ENCODE measurements at regions of chr2 and their contacts with region 1.

Region 1: DNA sequence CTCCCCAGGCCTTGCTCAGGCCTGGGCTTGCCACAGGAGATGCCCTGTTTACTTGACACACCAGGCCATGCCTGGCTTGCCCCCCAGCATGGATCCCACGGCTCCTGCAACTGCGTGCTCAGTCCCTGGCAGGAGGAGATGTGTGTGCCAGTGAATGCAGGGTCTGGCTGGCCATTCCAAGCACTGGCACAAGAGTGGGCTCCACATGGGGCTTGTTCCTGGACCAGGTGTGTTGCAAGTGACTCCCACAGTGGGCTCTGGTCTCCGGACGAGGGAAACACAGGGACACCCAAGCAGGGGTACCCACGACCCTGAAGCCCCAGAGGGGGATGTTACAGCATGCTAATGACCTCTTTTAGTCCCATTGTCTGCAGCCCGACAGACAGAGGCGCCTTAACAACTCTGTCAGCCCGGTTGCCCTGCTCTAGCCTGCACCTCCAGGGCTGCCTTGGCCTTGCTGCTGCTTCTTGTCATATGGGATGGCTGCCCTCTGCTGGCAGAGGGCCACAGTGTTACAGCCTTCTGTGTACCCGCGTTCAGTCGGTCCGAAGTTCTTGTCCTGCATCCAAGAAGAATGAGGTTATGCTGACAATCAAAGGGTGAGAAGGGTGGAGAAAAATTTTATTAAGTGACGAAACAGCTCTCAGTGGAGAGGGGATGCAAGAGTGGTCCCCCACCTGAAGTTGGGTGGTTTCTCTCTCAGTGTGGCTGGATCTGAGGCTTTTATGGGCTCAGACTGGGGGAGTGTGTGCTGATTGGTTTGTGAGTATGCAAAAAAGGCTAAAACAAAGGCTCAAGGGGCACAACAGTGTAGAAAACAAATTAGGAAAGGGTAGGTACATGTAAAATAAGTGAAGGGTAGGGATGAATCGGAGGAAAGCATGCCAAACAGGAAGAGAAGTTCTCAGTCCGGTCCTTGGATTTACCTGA is 180.4 kb downstream of the MBD5 start:
- DNase-seq: peak in 4 of 5 donors; percentile 17 to 23 (median 20)
- H3K4me3 ChIP-seq: no peak overlapping the region
- H3K4me3 Mint-ChIP-seq: no peak overlapping the region
- H3K27ac ChIP-seq: no peak overlapping the region
- H3K27ac Mint-ChIP-seq: peak overlapping the region in 2 of 7 donors; percentile 35 to 75
- H3K4me1 ChIP-seq: no peaks in the 10 kb centered on the region
- H3K4me1 Mint-ChIP-seq: peaks cover 0 to 5% (median under 1%) of the 10 kb centered on the region in 4 donors
- H3K27me3 ChIP-seq: no peaks in the 10 kb centered on the region
- H3K27me3 Mint-ChIP-seq: no peaks in the 10 kb centered on the region

Region 2: GRCh38 chr2:147989809-147990403 is 211.4 kb before region 1 on chr2:
- CTCF ChIA-PET with region 1: interaction called, 11 read pairs
- POLR2A ChIA-PET with region 1: no interaction called
- intact Hi-C with region 1: no loop called
- DNase-seq: peak; percentile 45 to 61 (median 58)
- H3K4me3 ChIP-seq: no peak overlapping the region
- H3K4me3 Mint-ChIP-seq: no peak overlapping the region
- H3K27ac ChIP-seq: no peak overlapping the region
- H3K27ac Mint-ChIP-seq: peak overlapping the region in 3 of 7 donors; percentile 7 to 72 (median 53)
- H3K4me1 ChIP-seq: no peaks in the 10 kb centered on the region
- H3K4me1 Mint-ChIP-seq: peaks cover 14 to 29% (median 19%) of the 10 kb centered on the region in 4 donors
- H3K27me3 ChIP-seq: no peaks in the 10 kb centered on the region
- H3K27me3 Mint-ChIP-seq: no peaks in the 10 kb centered on the region

Region 3: GRCh38 chr2:148756396-148756931 is 555.1 kb after region 1 on chr2:
- CTCF ChIA-PET with region 1: no interaction called
- POLR2A ChIA-PET with region 1: no interaction called
- intact Hi-C with region 1: no loop called
- DNase-seq: no peak
- H3K4me3 ChIP-seq: no peak overlapping the region
- H3K4me3 Mint-ChIP-seq: no peak overlapping the region
- H3K27ac ChIP-seq: no peak overlapping the region
- H3K27ac Mint-ChIP-seq: no peak overlapping the region
- H3K4me1 ChIP-seq: peaks cover 4% of the 10 kb centered on the region
- H3K4me1 Mint-ChIP-seq: peaks cover 22 to 35% (median 27%) of the 10 kb centered on the region in 4 donors
- H3K27me3 ChIP-seq: no peaks in the 10 kb centered on the region
- H3K27me3 Mint-ChIP-seq: no peaks in the 10 kb centered on the region

Measured in CD4-positive, alpha-beta memory T cell (primary cell).